ENCODE measurements at regions of chr9 and their contacts with region 1.

Region 1: GRCh38 chr9:1018121-1018701 is 31.9 kb upstream of the DMRT2 start:
- DNase-seq: peak; percentile 57
- H3K4me3 Mint-ChIP-seq: no peak overlapping the region
- H3K27ac Mint-ChIP-seq: no peak overlapping the region
- H3K4me1 Mint-ChIP-seq: peaks cover 3% of the 10 kb centered on the region
- H3K27me3 Mint-ChIP-seq: peaks cover 23% of the 10 kb centered on the region

Region 2: DNA sequence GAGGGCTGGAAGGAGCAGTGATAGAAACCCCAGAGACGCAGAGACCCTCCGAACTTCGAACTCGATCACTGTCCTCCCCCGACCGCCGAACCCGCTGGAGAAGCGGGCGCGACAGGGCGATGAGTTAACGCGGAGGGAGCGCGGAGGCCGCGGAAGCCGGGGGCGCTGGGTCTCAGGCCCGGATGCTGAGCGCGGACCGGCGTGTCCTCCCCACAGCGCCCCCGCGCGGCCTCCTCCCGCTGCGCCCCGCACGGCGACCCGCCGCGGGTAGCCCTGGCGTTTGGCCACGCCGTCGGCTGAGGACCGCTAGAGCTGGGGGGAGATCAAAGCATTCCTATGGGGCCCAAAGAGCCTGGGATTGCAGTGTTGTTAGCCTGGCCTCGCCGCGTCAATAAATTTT is 24.3 kb after region 1 on chr9:
- CTCF ChIA-PET with region 1: no interaction called
- intact Hi-C with region 1: no loop called
- DNase-seq: peak; percentile 54
- H3K4me3 Mint-ChIP-seq: peak overlapping the region; percentile 50
- H3K27ac Mint-ChIP-seq: no peak overlapping the region
- H3K4me1 Mint-ChIP-seq: peaks cover 31% of the 10 kb centered on the region
- H3K27me3 Mint-ChIP-seq: peaks cover 72% of the 10 kb centered on the region

Region 3: DNA sequence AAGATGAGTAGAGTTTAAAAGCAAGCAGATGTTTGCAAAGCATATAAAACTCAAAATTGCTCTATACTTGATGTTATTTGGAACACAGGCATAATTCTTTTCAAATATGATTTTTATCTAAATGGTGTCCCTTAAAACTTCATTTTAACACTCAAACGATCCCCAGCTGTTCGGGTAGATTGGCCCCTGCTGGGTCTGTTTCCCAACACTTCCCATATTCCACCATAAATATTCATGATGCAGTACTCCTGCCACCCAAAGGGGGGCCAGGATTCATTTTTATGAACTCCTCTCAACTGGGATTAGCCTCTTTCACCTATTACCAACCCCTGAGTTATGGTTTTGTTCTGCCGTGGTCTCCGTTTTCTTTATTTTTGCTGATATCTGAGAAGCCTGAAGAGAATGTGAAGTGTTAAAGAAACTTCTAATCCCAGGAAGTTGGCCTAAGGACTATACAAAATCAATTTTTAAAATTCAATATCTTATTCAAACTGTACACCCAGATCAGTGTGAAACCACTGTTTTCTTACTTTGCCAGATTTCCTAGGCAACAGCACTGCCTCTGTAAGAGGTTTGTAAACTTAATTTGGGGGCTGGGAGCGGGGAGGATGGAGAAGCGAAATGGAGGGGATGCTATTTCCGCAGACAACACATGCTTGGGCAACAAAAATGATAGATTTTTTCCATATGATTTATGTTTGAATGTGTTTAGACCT is 416.0 kb after region 1 on chr9:
- CTCF ChIA-PET with region 1: no interaction called
- intact Hi-C with region 1: loop called (anchors 10 kb)
- DNase-seq: no peak
- H3K4me3 Mint-ChIP-seq: no peak overlapping the region
- H3K27ac Mint-ChIP-seq: no peak overlapping the region
- H3K4me1 Mint-ChIP-seq: no peaks in the 10 kb centered on the region
- H3K27me3 Mint-ChIP-seq: peaks cover 12% of the 10 kb centered on the region

Measured in activated naive CD4-positive, alpha-beta T cell treated with anti-CD3 and anti-CD28 coated beads for 36 hours (primary cell).